CD14-positive monocyte (primary cell): ENCODE measurements at regions of chr21 and their contacts with region 1.

Region 1: GRCh38 chr21:29298348-29299045 is at the start of gene BACH1:
- DNase-seq: peak; percentile 93 to 95 (median 95)
- H3K4me3 ChIP-seq: peak within 1 kb of the TSS; percentile 96 to 97 (median 96)
- H3K4me3 Mint-ChIP-seq: peak within 1 kb of the TSS; percentile 95 to 98
- H3K27ac ChIP-seq: peak within 1 kb of the TSS; percentile 99 to 100
- H3K27ac Mint-ChIP-seq: peak within 1 kb of the TSS; percentile 97 to 100 (median 99)
- H3K4me1 ChIP-seq: peaks cover 53 to 81% of the 10 kb centered on the region in 2 donors
- H3K4me1 Mint-ChIP-seq: peaks cover 69% of the 10 kb centered on the region
- H3K27me3 ChIP-seq: no peaks in the 10 kb centered on the region
- H3K27me3 Mint-ChIP-seq: no peaks in the 10 kb centered on the region
- CTCF ChIP-seq: peak; percentile 45
- polyA plus RNA-seq, gene BACH1: 69.2 to 199 (median 148) TPM

Region 2: GRCh38 chr21:29091032-29091431 is 207.5 kb before region 1 on chr21:
- intact Hi-C with region 1: loop called (anchors 5 kb)
- DNase-seq: peak; percentile 48 to 76 (median 69)
- H3K4me3 ChIP-seq: no peak overlapping the region
- H3K4me3 Mint-ChIP-seq: no peak overlapping the region
- H3K27ac ChIP-seq: peak overlapping the region in 1 of 2 donors; percentile 79
- H3K27ac Mint-ChIP-seq: peak overlapping the region; percentile 79 to 97 (median 92)
- H3K4me1 ChIP-seq: peaks cover 26 to 38% of the 10 kb centered on the region in 2 donors
- H3K4me1 Mint-ChIP-seq: peaks cover 48% of the 10 kb centered on the region
- H3K27me3 ChIP-seq: no peaks in the 10 kb centered on the region
- H3K27me3 Mint-ChIP-seq: peaks cover 0 to 4% (median 2%) of the 10 kb centered on the region in 3 donors
- CTCF ChIP-seq: no peak

Region 3: DNA sequence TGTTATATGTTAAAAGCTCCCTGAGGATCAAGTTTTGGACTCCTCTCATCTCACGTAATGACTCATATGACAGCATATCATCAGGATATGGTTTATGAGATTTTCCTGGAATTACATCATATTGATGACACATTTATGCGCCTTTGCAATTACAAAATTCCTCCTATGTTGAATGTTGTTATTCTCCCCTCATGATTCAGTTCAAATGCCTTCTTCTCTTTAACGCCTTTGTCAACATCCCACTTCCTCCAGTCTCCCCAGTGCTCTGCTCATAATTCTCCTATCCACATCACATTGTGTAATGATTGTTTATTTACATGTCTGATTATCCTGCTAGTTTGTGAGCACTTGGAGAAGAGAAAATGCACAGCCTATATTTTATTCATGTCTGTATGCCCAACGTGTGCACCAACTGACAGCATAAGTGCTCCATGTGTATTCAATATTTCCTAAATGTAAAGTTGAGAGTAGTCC is 80.6 kb before region 1 on chr21:
- intact Hi-C with region 1: loop called in 1 of 2 experiments (anchors 5 kb)
- DNase-seq: peak; percentile 88 to 98 (median 96)
- H3K4me3 ChIP-seq: no peak overlapping the region
- H3K4me3 Mint-ChIP-seq: no peak overlapping the region
- H3K27ac ChIP-seq: peak overlapping the region; percentile 77 to 85
- H3K27ac Mint-ChIP-seq: peak overlapping the region; percentile 83 to 95 (median 92)
- H3K4me1 ChIP-seq: peaks cover 33 to 34% of the 10 kb centered on the region in 2 donors
- H3K4me1 Mint-ChIP-seq: peaks cover 33% of the 10 kb centered on the region
- H3K27me3 ChIP-seq: no peaks in the 10 kb centered on the region
- H3K27me3 Mint-ChIP-seq: no peaks in the 10 kb centered on the region
- CTCF ChIP-seq: no peak

Region 4: GRCh38 chr21:29315131-29315749 is 16.7 kb after region 1 on chr21:
- intact Hi-C with region 1: loop called in 1 of 2 experiments (anchors 2 kb)
- DNase-seq: peak in 1 of 3 donors; percentile 40
- H3K4me3 ChIP-seq: no peak overlapping the region
- H3K4me3 Mint-ChIP-seq: no peak overlapping the region
- H3K27ac ChIP-seq: peak overlapping the region; percentile 24 to 60
- H3K27ac Mint-ChIP-seq: peak overlapping the region; percentile 39 to 89 (median 82)
- H3K4me1 ChIP-seq: peaks cover 37 to 61% of the 10 kb centered on the region in 2 donors
- H3K4me1 Mint-ChIP-seq: peaks cover 92% of the 10 kb centered on the region
- H3K27me3 ChIP-seq: no peaks in the 10 kb centered on the region
- H3K27me3 Mint-ChIP-seq: no peaks in the 10 kb centered on the region
- CTCF ChIP-seq: no peak